ENCODE measurements at regions of chr14 and their contacts with region 1.

Region 1: GRCh38 chr14:75249251-75249957 is 29.2 kb upstream of the FOS start:
- DNase-seq: peak; percentile 91
- ATAC-seq: peak; percentile 81
- H3K4me3 Mint-ChIP-seq: peak overlapping the region; percentile 11
- H3K27ac Mint-ChIP-seq: peak overlapping the region; percentile 82
- H3K4me1 Mint-ChIP-seq: peaks cover 57% of the 10 kb centered on the region
- H3K27me3 Mint-ChIP-seq: peaks cover 2% of the 10 kb centered on the region

Region 2: GRCh38 chr14:74618078-74618952 is 631.1 kb before region 1 on chr14:
- CTCF ChIA-PET with region 1: no interaction called
- POLR2A ChIA-PET with region 1: no interaction called
- intact Hi-C with region 1: loop called in 1 of 2 experiments (anchors 5 kb)
- DNase-seq: peak; percentile 75
- ATAC-seq: peak; percentile 83
- H3K4me3 Mint-ChIP-seq: no peak overlapping the region
- H3K27ac Mint-ChIP-seq: peak overlapping the region; percentile 45
- H3K4me1 Mint-ChIP-seq: peaks cover 57% of the 10 kb centered on the region
- H3K27me3 Mint-ChIP-seq: peaks cover 7% of the 10 kb centered on the region

Region 3: GRCh38 chr14:75158843-75159614 is 90.4 kb before region 1 on chr14:
- CTCF ChIA-PET with region 1: no interaction called
- POLR2A ChIA-PET with region 1: no interaction called
- intact Hi-C with region 1: loop called (anchors 1 to 5 kb)
- DNase-seq: no peak
- ATAC-seq: peak; percentile 86
- H3K4me3 Mint-ChIP-seq: peak overlapping the region; percentile 25
- H3K27ac Mint-ChIP-seq: peak overlapping the region; percentile 93
- H3K4me1 Mint-ChIP-seq: peaks cover 66% of the 10 kb centered on the region
- H3K27me3 Mint-ChIP-seq: no peaks in the 10 kb centered on the region

Region 4: DNA sequence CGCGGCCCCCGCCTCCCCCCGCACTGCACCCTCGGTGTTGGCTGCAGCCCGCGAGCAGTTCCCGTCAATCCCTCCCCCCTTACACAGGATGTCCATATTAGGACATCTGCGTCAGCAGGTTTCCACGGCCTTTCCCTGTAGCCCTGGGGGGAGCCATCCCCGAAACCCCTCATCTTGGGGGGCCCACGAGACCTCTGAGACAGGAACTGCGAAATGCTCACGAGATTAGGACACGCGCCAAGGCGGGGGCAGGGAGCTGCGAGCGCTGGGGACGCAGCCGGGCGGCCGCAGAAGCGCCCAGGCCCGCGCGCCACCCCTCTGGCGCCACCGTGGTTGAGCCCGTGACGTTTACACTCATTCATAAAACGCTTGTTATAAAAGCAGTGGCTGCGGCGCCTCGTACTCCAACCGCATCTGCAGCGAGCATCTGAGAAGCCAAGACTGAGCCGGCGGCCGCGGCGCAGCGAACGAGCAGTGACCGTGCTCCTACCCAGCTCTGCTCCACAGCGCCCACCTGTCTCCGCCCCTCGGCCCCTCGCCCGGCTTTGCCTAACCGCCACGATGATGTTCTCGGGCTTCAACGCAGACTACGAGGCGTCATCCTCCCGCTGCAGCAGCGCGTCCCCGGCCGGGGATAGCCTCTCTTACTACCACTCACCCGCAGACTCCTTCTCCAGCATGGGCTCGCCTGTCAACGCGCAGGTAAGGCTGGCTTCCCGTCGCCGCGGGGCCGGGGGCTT is 29.2 kb after region 1 on chr14 and contains the start of gene FOS:
- CTCF ChIA-PET with region 1: interaction called, 3 read pairs
- POLR2A ChIA-PET with region 1: interaction called, 6 read pairs
- intact Hi-C with region 1: loop called (anchors 1 kb)
- DNase-seq: peak; percentile 92
- ATAC-seq: peak; percentile 91
- H3K4me3 Mint-ChIP-seq: peak within 1 kb of the TSS; percentile 85
- H3K27ac Mint-ChIP-seq: peak within 1 kb of the TSS; percentile 95
- H3K4me1 Mint-ChIP-seq: peaks cover 44% of the 10 kb centered on the region
- H3K27me3 Mint-ChIP-seq: peaks cover 24% of the 10 kb centered on the region
- total RNA-seq, gene FOS: 16.0 to 21.1 TPM

Region 5: DNA sequence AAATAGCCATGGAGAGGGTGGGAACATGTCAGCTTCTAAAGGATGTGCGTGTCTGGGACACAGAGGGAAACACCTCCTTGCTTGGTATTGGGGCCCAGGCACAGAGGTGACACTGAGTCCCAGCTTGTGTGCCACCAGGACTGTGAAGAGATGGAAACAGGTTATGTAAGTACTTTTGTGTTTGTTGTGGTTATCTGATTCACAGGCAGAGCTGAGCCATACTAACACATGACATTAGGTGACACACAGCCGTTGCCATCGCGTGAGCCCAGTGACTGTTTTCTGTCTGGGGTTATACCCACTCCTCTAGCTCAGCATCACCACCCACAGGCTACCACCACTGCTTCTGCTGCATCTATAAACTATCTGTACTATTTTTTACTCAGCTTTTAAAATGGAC is 316.9 kb after region 1 on chr14:
- CTCF ChIA-PET with region 1: no interaction called
- POLR2A ChIA-PET with region 1: interaction called, 3 read pairs
- intact Hi-C with region 1: loop called in 1 of 2 experiments (anchors 2 kb)
- DNase-seq: peak; percentile 94
- ATAC-seq: peak; percentile 82
- H3K4me3 Mint-ChIP-seq: peak overlapping the region; percentile 72
- H3K27ac Mint-ChIP-seq: peak overlapping the region; percentile 98
- H3K4me1 Mint-ChIP-seq: peaks cover 86% of the 10 kb centered on the region
- H3K27me3 Mint-ChIP-seq: no peaks in the 10 kb centered on the region

Region 6: DNA sequence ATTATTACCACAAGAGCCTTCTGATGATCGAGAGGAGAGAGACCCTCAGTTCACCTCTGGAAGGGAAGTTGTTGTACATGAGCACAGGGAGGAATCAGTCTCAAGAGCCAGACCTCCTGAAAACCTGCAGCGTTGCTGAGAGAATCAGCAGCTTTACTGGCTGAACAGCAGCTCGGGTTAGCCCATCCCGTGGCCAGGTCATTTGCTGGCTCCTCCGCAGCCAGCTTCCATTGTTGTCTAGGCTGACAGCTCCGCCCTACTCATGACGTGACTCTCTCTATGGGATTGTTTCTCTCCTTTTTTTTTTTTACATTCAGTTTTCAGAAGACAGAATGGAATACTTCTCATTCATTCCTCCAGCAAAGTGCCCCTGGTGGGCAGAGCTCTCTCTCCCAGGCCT is 662.5 kb after region 1 on chr14:
- CTCF ChIA-PET with region 1: no interaction called
- POLR2A ChIA-PET with region 1: no interaction called
- intact Hi-C with region 1: no loop called
- DNase-seq: no peak
- ATAC-seq: no peak
- H3K4me3 Mint-ChIP-seq: no peak overlapping the region
- H3K27ac Mint-ChIP-seq: no peak overlapping the region
- H3K4me1 Mint-ChIP-seq: no peaks in the 10 kb centered on the region
- H3K27me3 Mint-ChIP-seq: no peaks in the 10 kb centered on the region